ENCODE measurements at regions of chr4 and their contacts with region 1.

Region 1: DNA sequence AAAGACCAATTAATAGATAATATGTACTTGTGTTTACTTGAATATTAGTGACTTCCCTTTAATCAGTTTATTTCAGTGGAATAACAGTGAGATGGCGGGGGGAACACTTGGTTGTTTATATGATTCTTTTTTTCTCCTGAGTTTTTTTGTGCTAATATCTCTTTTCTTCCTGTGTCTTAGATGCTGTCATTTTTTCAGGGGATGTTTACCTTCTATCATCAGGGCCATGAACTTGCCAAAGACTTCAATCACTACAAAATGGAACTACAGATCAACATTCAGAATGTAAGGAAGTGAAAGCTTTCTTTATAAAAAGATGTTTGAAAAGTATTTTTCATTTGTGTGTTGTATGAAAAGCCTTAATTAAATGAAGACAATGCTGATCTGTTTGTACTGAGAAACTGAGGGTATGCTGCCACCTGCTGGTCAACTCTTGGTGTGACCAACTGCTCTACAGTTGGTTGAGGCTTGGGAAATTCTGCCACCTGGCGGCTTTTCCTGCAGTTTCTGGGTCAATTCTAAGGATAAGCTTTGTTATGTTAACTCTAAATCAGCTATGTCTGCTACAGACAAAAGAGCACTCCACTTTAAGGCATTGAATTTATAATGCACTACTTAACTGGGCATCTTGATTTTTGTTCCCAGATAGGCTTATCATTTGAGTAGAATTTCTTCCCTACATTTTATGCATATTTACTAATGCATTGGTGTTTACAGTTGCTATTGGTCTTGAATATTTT is 134.8 kb downstream of the ARHGAP10 start:
- DNase-seq: peak; percentile 96
- ATAC-seq: peak; percentile 92
- H3K4me3 Mint-ChIP-seq: no peak overlapping the region
- H3K27ac Mint-ChIP-seq: no peak overlapping the region
- H3K4me1 Mint-ChIP-seq: no peaks in the 10 kb centered on the region
- H3K27me3 Mint-ChIP-seq: no peaks in the 10 kb centered on the region

Region 2: DNA sequence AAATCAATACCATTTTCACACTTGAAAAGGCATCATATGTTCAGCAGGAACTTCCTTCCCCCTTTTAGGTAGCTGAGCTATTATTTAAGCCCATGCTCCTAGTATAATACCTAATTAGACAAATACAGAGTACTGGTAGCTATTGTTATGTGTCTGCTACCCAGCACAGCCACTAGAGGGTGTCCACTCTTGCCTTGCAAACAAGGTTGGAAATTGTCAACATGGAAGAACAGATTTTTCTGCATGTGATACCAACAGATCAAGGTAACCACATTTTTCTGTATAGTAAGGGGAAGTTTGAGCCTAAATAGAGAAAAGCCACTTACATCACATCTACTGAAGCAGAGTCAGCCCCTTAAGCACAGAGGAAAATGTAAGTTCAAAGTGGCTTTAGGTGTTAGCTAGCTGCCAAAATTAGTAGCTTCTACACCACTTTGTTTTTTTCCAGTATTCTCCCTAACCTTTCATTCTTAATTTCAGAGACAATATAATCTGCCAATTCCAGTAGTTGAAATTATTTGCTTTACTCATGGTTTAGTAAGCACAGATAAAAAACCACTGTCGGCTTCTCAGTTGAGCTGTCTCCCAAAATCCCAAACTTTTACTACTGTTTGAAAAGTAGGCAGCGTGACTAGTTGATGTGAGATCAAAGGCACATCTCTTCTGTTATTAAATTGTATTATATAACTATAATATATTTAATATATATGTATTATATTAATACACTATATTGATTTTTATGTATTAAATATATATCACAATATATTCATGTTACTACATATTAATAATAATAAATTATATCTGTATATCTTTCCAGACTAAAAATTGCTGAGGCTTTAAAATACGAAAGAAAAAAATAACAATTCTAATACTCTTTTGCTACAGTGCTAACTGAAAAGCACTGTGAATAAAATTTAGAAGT is 347.6 kb before region 1 on chr4:
- CTCF ChIA-PET with region 1: interaction called, 32 read pairs
- POLR2A ChIA-PET with region 1: interaction called, 11 read pairs
- intact Hi-C with region 1: loop called (anchors 1 kb)
- DNase-seq: peak; percentile 70
- ATAC-seq: peak; percentile 69
- H3K4me3 Mint-ChIP-seq: no peak overlapping the region
- H3K27ac Mint-ChIP-seq: no peak overlapping the region
- H3K4me1 Mint-ChIP-seq: no peaks in the 10 kb centered on the region
- H3K27me3 Mint-ChIP-seq: peaks cover 10% of the 10 kb centered on the region

Region 3: DNA sequence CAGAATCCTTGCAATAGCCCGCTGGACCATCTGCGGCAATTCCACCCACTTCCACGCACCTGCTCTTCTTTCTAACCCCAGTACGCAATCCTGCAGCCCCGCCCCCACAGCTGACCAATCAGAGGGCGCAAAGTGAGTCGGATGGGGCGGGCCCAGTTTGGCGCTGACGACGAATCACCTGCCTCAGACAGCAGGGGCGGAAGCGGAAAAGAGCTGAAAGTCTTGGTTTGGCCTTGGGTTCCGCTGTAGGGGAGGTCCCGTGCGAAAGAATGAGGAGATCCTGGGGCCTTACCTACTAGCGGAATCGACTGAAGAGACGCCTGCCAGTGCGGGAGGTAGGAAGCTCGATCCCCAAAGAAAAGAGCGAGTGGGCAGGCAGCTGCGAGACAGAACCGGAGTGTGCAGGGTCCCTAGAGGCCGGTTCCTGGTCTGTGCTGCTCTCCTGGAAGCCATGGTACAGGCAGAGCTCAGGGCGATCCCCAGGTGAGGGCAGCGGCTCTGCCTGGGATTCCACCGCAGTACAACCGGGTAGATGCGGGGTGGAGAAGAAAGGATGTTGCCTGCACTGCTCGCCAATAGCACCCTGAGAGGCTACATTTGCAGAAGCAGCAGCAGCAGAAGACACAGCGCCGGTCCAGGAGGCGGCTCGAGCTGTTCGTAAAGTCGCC is 249.4 kb before region 1 on chr4 and contains the start of gene TMEM184C:
- CTCF ChIA-PET with region 1: interaction called, 50 read pairs
- POLR2A ChIA-PET with region 1: no interaction called
- intact Hi-C with region 1: loop called in 1 of 2 experiments (anchors 1 kb)
- DNase-seq: peak; percentile 99
- ATAC-seq: peak; percentile 98
- H3K4me3 Mint-ChIP-seq: peak within 1 kb of the TSS; percentile 93
- H3K27ac Mint-ChIP-seq: peak within 1 kb of the TSS; percentile 94
- H3K4me1 Mint-ChIP-seq: peaks cover 26% of the 10 kb centered on the region
- H3K27me3 Mint-ChIP-seq: peaks cover 3% of the 10 kb centered on the region
- total RNA-seq, gene TMEM184C: 11.7 to 15.3 TPM

Region 4: GRCh38 chr4:147689067-147689466 is 177.6 kb before region 1 on chr4:
- CTCF ChIA-PET with region 1: interaction called, 40 read pairs
- POLR2A ChIA-PET with region 1: no interaction called
- intact Hi-C with region 1: loop called in 1 of 2 experiments (anchors 2 kb)
- DNase-seq: no peak
- ATAC-seq: no peak
- H3K4me3 Mint-ChIP-seq: no peak overlapping the region
- H3K27ac Mint-ChIP-seq: no peak overlapping the region
- H3K4me1 Mint-ChIP-seq: peaks cover 8% of the 10 kb centered on the region
- H3K27me3 Mint-ChIP-seq: peaks cover 13% of the 10 kb centered on the region

Region 5: DNA sequence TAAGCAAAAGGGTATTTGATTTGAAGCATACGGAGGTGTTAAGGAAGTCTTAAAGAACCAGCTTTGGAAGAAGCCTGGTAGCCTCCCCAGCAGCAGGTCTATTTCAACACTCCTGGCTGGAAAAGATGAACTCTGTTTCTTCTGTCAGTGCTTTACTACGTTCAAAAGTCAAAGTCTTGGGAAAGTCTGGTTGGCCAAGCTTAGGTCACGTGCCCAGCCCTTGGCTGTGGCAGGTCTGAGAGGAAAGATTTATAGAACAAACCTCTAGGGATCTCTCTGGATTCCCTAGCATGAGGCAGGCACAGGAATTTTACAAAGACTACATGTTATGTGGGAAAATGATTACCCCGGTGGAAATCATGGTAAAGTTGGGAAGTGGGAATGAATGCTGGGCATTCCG is 143.4 kb before region 1 on chr4:
- CTCF ChIA-PET with region 1: interaction called, 16 read pairs
- POLR2A ChIA-PET with region 1: no interaction called
- intact Hi-C with region 1: no loop called
- DNase-seq: no peak
- ATAC-seq: no peak
- H3K4me3 Mint-ChIP-seq: no peak overlapping the region
- H3K27ac Mint-ChIP-seq: no peak overlapping the region
- H3K4me1 Mint-ChIP-seq: no peaks in the 10 kb centered on the region
- H3K27me3 Mint-ChIP-seq: peaks cover 3% of the 10 kb centered on the region

Region 6: GRCh38 chr4:147786031-147786430 is 80.7 kb before region 1 on chr4:
- CTCF ChIA-PET with region 1: interaction called, 21 read pairs
- POLR2A ChIA-PET with region 1: no interaction called
- intact Hi-C with region 1: no loop called
- DNase-seq: no peak
- ATAC-seq: no peak
- H3K4me3 Mint-ChIP-seq: no peak overlapping the region
- H3K27ac Mint-ChIP-seq: no peak overlapping the region
- H3K4me1 Mint-ChIP-seq: peaks cover 27% of the 10 kb centered on the region
- H3K27me3 Mint-ChIP-seq: no peaks in the 10 kb centered on the region

Region 7: DNA sequence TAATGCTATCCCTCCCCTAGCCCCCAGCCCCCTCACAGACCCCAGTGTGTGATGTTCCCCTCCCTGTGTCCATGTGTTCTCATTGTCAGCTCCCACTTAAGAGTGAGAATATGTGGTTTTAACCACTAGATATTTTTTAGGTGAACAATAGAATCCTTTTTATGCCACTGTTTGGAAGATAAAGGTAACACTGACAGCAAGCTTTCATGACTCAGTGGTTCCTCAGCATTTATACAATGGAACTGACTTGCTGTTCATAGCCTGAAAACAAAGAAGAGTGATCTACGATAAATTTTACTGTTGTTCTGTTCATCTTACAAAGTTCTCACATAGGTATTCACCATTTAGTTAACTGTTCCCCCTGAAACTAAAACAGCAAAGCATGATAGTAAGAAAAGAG is 13.0 kb after region 1 on chr4:
- CTCF ChIA-PET with region 1: interaction called, 32 read pairs
- POLR2A ChIA-PET with region 1: no interaction called
- intact Hi-C with region 1: no loop called
- DNase-seq: no peak
- ATAC-seq: no peak
- H3K4me3 Mint-ChIP-seq: no peak overlapping the region
- H3K27ac Mint-ChIP-seq: no peak overlapping the region
- H3K4me1 Mint-ChIP-seq: no peaks in the 10 kb centered on the region
- H3K27me3 Mint-ChIP-seq: no peaks in the 10 kb centered on the region